Mammary epithelial cell (primary cell): ENCODE measurements at regions of chr5 and their contacts with region 1.

Region 1: DNA sequence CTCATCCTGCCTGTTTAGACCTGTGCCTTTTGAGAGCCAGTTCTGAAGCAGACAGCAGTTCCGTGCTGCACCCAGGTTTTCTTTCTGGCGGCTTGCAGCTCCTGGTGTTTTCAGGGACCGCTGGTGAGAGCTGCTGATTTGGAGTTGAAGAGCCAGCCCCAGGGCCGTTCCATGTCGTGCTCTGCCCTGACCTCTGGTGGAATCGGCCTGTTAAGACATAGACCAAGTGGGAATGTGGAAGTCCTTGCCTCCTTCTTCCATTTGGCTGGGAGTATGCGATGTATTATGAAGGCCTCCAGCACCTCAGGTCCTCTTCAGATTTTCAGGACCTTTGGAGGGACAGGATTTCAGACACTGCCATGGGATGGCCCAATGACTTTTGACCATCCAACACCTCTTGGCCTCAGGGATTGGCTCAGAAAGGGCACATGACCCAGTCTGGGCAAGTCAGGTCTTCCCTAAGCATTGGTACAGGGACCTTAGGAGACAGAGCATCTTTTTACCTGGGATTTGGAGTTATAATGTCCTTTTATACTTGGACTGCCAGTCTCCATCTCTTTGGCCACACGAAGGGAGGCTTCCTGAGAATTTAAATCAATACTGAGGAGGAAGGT is 136.1 kb upstream of the CLINT1 start:
- DNase-seq: peak; percentile 67
- H3K4me3 ChIP-seq: no peak overlapping the region
- H3K27ac ChIP-seq: no peak overlapping the region
- H3K4me1 ChIP-seq: no peaks in the 10 kb centered on the region
- H3K27me3 ChIP-seq: no peaks in the 10 kb centered on the region
- CTCF ChIP-seq: peak; percentile 69 to 90

Region 2: DNA sequence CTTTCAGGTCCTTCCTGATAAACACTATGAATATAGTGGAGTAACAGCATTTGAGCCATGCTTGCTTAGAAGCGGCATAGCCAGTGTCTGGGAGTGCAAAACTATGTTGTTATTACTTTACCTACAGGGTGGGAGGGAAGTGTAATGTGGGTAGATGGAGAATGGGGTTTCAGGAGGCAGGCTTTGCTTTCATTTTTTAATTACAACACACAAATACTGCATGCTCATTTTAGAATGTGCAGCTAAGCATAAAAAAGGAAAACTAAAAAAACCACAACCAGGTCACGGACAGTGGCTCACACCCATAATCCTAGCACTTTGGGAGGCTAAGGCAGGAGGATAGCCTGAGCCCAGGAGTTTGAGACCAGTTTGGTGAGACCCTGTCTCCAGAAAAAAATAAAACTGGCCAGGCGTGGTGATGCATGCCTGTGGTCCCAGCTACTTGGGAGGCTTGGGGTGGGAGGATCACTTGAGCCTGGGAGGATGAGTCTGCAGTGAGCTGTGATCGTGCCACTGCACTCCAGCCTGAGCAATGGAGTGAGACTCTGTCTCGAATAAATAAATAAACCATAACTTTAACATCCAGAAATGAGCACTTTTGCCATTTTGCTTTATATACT is 956.3 kb before region 1 on chr5:
- CTCF ChIA-PET with region 1: no interaction called
- dilution Hi-C with region 1: no loop called
- in situ Hi-C with region 1: no loop called
- intact Hi-C with region 1: no loop called
- DNase-seq: no peak
- H3K4me3 ChIP-seq: no peak overlapping the region
- H3K27ac ChIP-seq: no peak overlapping the region
- H3K4me1 ChIP-seq: no peaks in the 10 kb centered on the region
- H3K27me3 ChIP-seq: no peaks in the 10 kb centered on the region
- CTCF ChIP-seq: no peak

Region 3: DNA sequence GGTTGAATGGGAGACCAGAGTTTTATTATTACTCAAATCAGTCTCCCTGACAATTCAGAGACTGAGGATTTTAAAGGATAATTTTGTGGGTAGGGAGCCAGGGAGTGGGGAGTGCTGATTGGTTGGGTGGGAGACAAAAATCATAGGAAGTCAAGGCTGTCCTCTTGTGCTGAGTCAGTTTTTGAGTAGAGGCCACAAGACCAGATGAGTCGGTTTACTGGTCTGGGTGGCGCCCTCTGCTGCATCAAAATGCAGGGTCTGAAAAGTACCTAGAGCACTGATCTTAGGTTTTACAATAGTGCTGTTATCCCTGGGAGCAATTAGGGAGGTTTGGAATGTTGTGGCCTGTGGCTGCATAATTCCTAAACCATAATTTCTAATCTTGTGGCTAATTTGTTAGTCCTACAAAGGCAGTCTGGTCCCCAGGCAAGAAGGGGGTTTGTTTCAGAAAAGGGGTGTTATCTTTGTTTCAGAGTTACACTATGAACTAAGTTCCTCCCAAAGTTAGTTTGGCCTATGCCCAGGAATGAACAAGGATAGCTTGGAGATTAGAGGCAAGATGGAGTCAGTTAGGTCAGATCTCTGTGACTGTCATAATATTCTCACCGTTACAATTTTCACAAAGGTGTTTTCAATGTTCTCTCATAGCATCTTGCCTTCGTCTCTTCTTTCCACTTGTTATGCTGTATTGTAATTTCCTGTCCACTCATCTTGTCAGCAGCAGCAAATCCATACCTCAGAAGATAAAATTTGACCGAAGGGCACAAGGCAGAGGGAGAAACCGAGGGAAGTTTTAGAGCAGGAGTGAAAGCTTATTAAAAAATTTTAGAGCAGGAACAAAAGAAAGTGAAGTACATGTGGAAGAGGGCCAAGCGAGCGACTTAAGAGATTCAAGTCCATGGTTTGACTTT is 76.9 kb before region 1 on chr5:
- CTCF ChIA-PET with region 1: no interaction called
- dilution Hi-C with region 1: no loop called
- in situ Hi-C with region 1: no loop called
- intact Hi-C with region 1: loop called (anchors 1 kb)
- DNase-seq: peak; percentile 73
- H3K4me3 ChIP-seq: no peak overlapping the region
- H3K27ac ChIP-seq: no peak overlapping the region
- H3K4me1 ChIP-seq: no peaks in the 10 kb centered on the region
- H3K27me3 ChIP-seq: no peaks in the 10 kb centered on the region
- CTCF ChIP-seq: peak; percentile 57 to 77

Region 4: DNA sequence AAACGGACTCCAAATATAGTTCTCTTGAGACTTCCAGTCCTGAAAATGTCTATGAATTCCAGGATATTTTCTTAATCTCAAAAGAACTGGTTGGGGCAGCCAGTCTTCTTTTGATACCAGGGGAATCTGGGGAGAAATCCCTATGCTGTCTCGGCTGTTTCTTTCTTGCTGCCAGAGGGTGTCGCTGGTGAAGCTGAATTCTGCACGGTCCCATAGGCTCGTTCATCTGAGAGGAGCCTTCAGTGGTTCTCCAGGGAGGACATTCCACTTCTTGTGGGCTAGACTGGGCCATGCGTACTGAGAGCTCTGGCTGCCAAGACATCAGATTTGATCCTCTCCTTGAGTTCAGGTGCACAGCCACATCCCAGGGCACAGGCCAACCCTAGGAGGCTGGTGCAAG is 18.9 kb after region 1 on chr5:
- CTCF ChIA-PET with region 1: no interaction called
- dilution Hi-C with region 1: no loop called
- in situ Hi-C with region 1: no loop called
- intact Hi-C with region 1: no loop called
- DNase-seq: peak; percentile 21
- H3K4me3 ChIP-seq: no peak overlapping the region
- H3K27ac ChIP-seq: no peak overlapping the region
- H3K4me1 ChIP-seq: no peaks in the 10 kb centered on the region
- H3K27me3 ChIP-seq: no peaks in the 10 kb centered on the region
- CTCF ChIP-seq: peak in 1 of 2 donors; percentile 56